Breast epithelium (tissue), 4 donors: ENCODE measurements at regions of chr6 and their contacts with region 1.

Region 1: DNA sequence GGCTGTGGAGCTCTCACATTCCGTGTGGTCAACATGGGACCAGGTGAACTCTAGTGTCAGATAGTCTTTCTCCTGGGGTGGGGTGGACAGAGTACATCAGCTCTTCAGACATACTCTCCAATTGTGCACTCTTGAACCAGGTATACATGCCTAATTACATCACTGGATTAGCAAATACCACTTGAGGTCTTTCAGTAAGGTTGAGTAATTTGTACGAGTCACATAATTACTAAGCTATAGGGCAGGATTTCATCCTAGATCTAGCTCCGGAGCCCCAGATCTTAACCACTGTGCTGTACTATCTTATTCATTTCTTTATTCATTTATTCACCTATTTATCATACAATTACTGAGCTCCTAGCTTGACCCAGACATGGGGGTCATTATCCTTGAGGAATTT is 821.3 kb downstream of the TFAP2A start:
- DNase-seq: no peak
- H3K4me3 ChIP-seq: no peak overlapping the region
- H3K27ac ChIP-seq: no peak overlapping the region
- H3K4me1 ChIP-seq: no peaks in the 10 kb centered on the region
- H3K27me3 ChIP-seq: no peaks in the 10 kb centered on the region
- CTCF ChIP-seq: no peak
- POLR2A ChIP-seq: no peak

Region 2: GRCh38 chr6:9520417-9521151 is 73.0 kb before region 1 on chr6:
- intact Hi-C with region 1: no loop called
- DNase-seq: no peak
- H3K4me3 ChIP-seq: no peak overlapping the region
- H3K27ac ChIP-seq: no peak overlapping the region
- H3K4me1 ChIP-seq: no peaks in the 10 kb centered on the region
- H3K27me3 ChIP-seq: no peaks in the 10 kb centered on the region
- CTCF ChIP-seq: no peak
- POLR2A ChIP-seq: no peak

Region 3: GRCh38 chr6:9564021-9564420 is 29.5 kb before region 1 on chr6:
- intact Hi-C with region 1: loop called (anchors 2 kb)
- DNase-seq: no peak
- H3K4me3 ChIP-seq: no peak overlapping the region
- H3K27ac ChIP-seq: no peak overlapping the region
- H3K4me1 ChIP-seq: no peaks in the 10 kb centered on the region
- H3K27me3 ChIP-seq: no peaks in the 10 kb centered on the region
- CTCF ChIP-seq: no peak
- POLR2A ChIP-seq: no peak